PC-3 (cell line): ENCODE measurements at regions of chr1 and their contacts with region 1.

Region 1: DNA sequence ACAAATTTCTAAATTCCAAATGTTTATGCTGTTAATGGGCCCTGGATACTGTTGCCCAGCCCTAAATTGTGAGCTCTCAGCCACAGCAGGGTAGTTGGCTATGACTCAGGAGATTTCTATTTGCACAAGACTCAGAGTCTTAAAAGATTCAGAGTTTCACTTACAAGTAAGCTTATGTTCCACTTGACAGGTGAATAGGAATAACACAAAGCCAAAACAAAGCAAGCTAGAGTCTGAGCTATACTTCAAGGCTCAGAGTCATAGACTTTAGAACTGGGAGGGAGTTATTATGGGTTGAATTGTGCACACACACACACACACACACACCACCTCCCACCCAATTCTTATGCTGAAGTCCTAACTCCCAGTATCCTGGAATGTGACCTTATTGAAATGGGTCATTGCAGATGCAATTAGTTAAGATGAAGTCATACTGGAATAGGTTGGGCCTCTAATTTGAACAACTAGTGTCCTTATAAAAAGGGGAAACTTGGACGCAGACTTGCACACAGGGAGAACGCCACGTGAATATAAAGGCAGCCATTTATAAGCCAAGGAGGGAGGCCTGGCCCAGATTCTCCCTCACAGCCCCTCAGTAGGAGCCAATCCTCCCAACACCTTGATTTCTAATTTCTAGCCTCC is 30.2 kb downstream of the PRDX6 start:
- DNase-seq: peak; percentile 100
- ATAC-seq: peak; percentile 87
- H3K4me3 ChIP-seq: peak overlapping the region; percentile 48
- H3K27ac ChIP-seq: peak overlapping the region; percentile 83
- H3K4me1 ChIP-seq: peaks cover 37% of the 10 kb centered on the region
- H3K27me3 ChIP-seq: no peaks in the 10 kb centered on the region
- CTCF ChIP-seq: no peak

Region 2: DNA sequence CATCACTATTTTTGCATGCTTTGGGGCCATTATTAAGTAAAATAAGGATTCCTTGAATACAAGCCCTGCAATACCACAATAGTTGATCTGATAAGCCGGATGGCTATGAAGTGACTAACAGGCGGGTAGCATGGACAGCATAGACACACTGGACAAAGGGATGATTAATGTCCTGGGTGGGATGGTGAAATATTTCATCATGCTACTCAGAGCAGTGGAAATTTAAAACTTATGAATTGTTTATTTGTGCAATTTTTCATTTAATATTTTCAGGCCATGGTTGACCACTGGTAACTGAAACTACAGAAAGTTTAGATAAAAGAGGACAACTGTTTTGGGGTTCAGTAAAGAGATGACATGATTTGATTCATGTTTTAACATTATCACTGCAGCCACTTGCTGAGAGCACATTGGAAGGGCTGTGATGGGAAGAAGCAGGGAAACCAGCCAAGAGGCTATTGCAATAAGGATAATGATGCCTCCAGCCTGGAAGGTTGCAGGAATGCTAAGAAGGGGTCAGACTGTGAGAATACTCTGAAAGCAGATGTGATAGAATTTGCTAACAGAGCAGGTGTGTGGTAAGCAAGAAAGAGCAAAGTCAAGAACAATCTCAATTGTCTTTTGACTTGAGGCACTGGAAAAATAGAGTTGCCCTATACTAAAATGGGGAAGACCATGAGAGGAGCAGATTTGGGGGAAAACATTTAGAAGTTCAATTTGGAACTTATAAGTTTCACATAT is 237.7 kb before region 1 on chr1:
- CTCF ChIA-PET with region 1: interaction called, 3 read pairs
- POLR2A ChIA-PET with region 1: no interaction called
- intact Hi-C with region 1: loop called (anchors 2 kb)
- DNase-seq: peak; percentile 100
- ATAC-seq: peak; percentile 94
- H3K4me3 ChIP-seq: peak overlapping the region; percentile 3; the same call in 1 of the 2 replicates
- H3K27ac ChIP-seq: peak overlapping the region; percentile 62
- H3K4me1 ChIP-seq: peaks cover 46% of the 10 kb centered on the region
- H3K27me3 ChIP-seq: no peaks in the 10 kb centered on the region
- CTCF ChIP-seq: no peak

Region 3: DNA sequence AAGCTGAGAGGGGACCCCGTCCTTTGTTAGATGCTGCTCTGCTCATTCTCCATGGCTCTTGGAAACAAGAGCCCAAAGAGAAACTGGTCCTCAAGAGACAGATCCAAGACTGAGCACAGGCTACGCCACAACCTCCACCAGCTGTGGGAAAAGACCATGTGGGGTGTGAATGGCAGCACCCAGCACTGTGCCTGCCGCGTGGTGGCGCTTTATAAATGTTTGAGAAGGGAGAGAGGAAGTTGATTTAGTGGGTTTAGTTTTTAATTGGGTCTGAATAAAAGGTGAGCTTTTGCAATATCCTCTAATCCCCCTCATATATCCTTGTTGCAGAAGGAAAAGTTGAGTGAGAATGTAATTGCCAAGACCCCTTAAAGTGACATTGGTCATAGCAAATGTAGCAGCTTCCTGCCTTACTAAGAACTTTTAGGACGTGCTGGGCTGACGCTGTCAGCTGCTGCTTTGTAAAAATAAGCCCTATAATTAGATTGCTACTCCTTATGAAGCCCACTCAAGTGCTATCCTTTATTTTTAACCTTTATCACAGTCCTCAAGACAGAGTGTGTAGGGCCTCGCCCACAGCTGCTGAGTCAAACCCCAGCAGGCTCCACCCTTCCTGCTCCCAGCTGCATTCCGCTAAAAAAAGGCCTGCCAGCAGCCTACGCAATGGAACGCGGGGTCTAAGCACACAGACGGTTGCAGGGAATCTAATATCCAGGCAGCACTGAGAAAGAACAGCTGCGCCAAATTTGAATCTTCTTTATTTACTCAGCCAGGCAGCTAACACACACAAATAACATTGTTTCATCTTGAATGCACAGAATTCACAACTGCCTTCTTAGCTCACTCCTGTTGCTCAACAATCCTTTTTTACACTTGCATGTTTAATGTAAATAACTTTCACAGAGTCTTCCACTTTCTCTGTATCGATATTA is 77.6 kb before region 1 on chr1:
- CTCF ChIA-PET with region 1: interaction called, 27 read pairs
- POLR2A ChIA-PET with region 1: interaction called, 12 read pairs
- intact Hi-C with region 1: loop called (anchors 1 kb)
- DNase-seq: peak; percentile 100
- ATAC-seq: peak; percentile 83
- H3K4me3 ChIP-seq: peak overlapping the region; percentile 47
- H3K27ac ChIP-seq: peak overlapping the region; percentile 71
- H3K4me1 ChIP-seq: peaks cover 71% of the 10 kb centered on the region
- H3K27me3 ChIP-seq: no peaks in the 10 kb centered on the region
- CTCF ChIP-seq: peak; percentile 96

Region 4: DNA sequence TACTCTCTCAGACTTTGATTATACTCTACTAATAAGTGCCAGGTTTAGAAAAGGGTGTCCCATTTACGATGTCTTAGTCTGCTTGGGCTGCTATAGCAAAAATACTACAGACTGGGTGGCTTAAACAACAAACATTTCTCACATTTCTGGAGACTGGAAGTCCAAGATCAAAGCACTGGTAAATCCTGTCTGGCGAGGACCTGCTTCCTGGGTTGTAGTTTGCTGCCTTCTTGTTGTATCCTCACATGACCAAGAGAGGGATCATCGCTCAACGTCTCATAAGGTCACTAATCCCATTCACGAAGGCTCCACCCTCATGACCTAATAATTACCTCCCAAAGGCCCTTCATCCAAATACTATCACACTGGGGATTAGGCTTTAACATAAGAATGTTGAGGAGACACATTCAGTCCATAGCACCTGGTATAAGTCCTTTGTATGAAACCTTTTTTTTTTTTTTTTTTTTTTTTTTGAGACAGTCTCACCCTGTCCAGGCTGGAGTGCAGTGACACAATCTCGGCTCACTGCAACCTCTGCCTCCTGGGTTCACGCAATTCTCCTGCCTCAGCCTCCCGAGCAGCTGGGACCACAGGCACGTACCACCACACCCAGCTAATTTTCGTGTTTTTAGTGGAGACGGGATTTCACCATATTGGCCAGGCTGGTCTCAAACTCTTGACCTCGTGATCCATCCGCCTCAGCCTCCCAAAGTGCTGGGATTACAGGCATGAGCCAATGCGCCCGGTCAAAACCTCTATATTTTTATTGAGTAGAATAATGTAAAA is 18.0 kb before region 1 on chr1:
- CTCF ChIA-PET with region 1: no interaction called
- POLR2A ChIA-PET with region 1: interaction called, 4 read pairs
- intact Hi-C with region 1: loop called (anchors 1 kb)
- DNase-seq: peak; percentile 80
- ATAC-seq: peak; percentile 54
- H3K4me3 ChIP-seq: no peak overlapping the region
- H3K27ac ChIP-seq: no peak overlapping the region
- H3K4me1 ChIP-seq: peaks cover 8% of the 10 kb centered on the region; the same call in 1 of the 2 replicates
- H3K27me3 ChIP-seq: no peaks in the 10 kb centered on the region
- CTCF ChIP-seq: peak; percentile 63

Region 5: DNA sequence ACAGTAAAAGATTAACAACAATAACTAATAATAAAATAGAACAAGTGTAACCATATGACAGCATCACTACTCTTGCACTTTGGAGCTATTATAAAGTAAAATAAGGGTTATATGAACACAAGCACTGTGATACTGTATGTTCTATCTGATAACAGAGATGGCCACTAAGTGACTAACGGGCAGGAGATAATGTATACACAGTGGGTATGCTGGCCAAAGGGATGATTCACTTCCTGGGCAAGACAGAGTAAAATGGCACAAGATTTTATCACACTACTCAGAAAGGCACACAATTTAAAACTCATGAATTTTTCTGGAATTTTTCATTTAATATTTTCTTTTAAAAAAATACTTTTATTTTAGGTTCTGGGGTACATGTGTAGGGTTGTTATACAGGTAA is 83.2 kb after region 1 on chr1:
- CTCF ChIA-PET with region 1: no interaction called
- POLR2A ChIA-PET with region 1: no interaction called
- intact Hi-C with region 1: loop called (anchors 1 kb)
- DNase-seq: peak; percentile 97
- ATAC-seq: peak; percentile 100
- H3K4me3 ChIP-seq: no peak overlapping the region
- H3K27ac ChIP-seq: peak overlapping the region; percentile 42
- H3K4me1 ChIP-seq: peaks cover 12% of the 10 kb centered on the region
- H3K27me3 ChIP-seq: no peaks in the 10 kb centered on the region
- CTCF ChIP-seq: no peak

Region 6: DNA sequence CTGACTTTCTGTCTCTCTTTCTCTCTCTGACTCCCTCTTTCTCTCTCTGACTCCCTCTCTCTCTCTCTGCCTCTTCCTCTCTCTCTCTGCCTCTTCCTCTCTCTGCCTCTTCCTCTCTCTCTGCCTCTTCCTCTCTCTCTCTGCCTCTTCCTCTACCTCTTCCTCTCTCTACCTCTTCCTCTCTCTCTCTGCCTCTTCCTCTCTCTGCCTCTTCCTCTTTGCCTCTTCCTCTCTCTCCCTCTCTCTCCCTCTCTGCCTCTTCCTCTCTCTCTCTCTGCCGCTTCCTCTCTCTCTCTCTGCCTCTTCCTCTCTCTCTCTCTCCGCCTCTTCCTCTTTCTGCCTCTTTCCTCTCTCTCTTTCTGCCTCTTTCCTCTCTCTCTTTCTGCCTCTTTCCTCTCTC is 181.0 kb after region 1 on chr1:
- CTCF ChIA-PET with region 1: interaction called, 5 read pairs
- POLR2A ChIA-PET with region 1: interaction called, 6 read pairs
- intact Hi-C with region 1: loop called (anchors 1 kb)
- DNase-seq: no peak
- ATAC-seq: no peak
- H3K4me3 ChIP-seq: no peak overlapping the region
- H3K27ac ChIP-seq: no peak overlapping the region
- H3K4me1 ChIP-seq: peaks cover 12% of the 10 kb centered on the region; the same call in 1 of the 2 replicates
- H3K27me3 ChIP-seq: no peaks in the 10 kb centered on the region
- CTCF ChIP-seq: no peak

Region 7: GRCh38 chr1:173824331-173825081 is 317.2 kb after region 1 on chr1 and contains the starts of genes CENPL and DARS2:
- CTCF ChIA-PET with region 1: interaction called, 4 read pairs
- POLR2A ChIA-PET with region 1: no interaction called
- intact Hi-C with region 1: loop called (anchors 1 kb)
- DNase-seq: peak; percentile 100
- ATAC-seq: peak; percentile 88
- H3K4me3 ChIP-seq: peak within 1 kb of the TSS; percentile 72
- H3K27ac ChIP-seq: peak within 1 kb of the TSS; percentile 81
- H3K4me1 ChIP-seq: peaks cover 56% of the 10 kb centered on the region
- H3K27me3 ChIP-seq: no peaks in the 10 kb centered on the region
- CTCF ChIP-seq: no peak
- total RNA-seq, gene CENPL: 92.8 and 108 TPM in 2 replicates
- total RNA-seq, gene DARS2: 71.8 and 77.3 TPM in 2 replicates